ENCODE measurements at regions of chr14 and their contacts with region 1.

Region 1: DNA sequence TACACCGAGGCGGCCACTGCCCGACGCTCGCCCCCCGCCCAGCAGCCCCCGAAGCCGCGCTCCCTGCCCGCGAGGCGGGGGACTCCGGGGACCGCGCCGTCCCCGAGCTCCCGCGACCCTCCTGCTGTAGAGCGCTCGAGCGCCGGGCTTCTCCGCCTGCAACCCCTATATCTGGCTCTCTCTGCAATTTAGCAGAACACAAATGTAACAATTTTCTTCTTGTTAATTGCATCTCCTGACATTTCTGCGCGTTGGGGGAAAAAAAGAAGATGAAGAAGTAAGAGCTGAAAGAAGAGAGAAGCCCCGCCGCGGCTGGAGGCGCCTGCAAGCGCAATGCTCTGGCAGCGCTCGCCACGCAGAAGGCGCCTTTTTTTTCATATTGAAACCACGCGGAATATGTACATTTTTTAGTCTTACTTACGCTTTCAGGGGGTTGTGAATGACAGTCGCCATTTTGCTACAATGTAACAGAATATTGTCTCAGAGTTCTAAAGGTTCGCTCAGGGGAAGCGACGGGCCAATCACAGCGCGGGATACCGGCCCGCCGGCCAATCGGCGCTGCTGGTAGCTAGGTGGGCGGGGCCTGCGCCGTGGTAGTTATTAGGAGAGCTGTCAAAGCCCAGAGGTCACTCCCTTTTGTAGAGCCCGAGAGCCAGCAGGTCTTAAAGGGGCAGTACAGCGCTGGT is at the start of gene DPF3:
- DNase-seq: peak; percentile 96
- H3K4me3 ChIP-seq: peak within 1 kb of the TSS; percentile 78
- H3K27ac ChIP-seq: peak within 1 kb of the TSS; percentile 90
- H3K4me1 ChIP-seq: peaks cover 52% of the 10 kb centered on the region
- H3K27me3 ChIP-seq: peaks cover 15% of the 10 kb centered on the region
- CTCF ChIP-seq: no peak
- total RNA-seq, gene DPF3: 37.7 TPM

Region 2: DNA sequence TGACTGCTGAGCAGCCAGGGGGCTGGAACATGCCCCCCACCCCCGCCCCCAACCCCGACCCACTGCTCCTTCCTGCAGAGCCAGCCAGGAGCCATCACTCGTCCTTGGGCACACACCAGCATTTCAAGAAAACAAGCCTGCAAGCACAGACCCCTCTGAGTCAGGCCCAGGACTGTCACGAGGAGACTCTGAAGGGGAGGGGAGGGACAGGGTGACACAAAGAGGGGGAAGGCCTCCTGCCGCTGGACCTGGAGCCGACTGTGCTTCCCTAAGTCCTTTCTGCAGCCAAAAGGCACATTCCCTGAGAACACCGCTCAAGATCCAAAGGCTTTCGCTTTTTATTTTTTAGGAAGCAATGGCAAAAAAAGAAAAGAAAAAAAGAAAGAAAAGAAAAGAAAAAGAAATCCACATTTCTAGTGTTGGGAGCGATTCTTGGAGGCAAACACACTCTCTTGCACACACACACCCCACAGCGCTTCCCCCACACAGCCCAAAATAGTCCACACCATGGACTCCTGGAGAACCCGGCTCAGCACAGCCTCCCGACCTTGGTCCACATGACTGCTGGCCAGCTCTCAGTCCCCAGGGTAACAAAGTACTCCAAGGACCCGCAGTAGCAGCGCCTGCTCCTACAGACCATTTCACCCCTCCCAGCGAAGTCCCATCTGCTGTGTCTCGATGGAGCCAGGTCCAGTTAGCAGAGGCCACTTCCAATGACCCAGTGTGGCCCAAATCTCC is 101.6 kb before region 1 on chr14:
- intact Hi-C with region 1: no loop called
- DNase-seq: peak; percentile 75
- H3K4me3 ChIP-seq: peak overlapping the region; percentile 32
- H3K27ac ChIP-seq: peak overlapping the region; percentile 87
- H3K4me1 ChIP-seq: peaks cover 73% of the 10 kb centered on the region
- H3K27me3 ChIP-seq: no peaks in the 10 kb centered on the region
- CTCF ChIP-seq: no peak

Region 3: DNA sequence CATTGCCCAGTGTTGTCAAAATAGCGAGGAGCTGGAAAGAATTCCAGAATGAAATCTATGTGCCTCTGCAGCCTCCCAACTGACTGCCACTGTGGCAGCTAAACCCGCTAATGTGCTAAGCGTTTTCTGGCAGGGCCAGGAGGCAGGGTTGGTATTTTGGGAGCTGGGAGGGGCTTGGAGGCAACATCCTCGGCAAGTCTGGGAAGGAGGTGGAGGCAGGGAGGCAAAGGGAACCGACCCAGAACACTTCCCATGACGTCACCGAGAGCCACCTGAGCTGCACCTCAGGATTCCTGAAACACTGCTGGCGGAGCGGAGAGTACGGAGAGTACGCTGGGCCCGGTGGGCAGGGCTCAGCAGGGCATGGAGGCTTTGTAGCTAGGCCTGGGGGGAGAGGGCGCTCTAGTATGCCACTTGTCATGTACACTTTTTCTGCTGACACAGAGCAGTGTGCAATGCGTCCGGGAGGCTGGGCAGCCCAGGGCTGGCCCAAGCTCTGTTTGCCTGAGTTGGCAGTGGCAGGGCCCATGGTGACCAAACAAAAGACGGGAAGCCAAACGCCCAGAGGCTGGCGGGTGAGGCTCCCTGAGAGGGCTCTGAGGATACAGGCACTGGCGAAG is 81.4 kb before region 1 on chr14:
- intact Hi-C with region 1: loop called (anchors 10 kb)
- DNase-seq: peak; percentile 82
- H3K4me3 ChIP-seq: peak overlapping the region; percentile 50
- H3K27ac ChIP-seq: peak overlapping the region; percentile 93
- H3K4me1 ChIP-seq: peaks cover 89% of the 10 kb centered on the region
- H3K27me3 ChIP-seq: no peaks in the 10 kb centered on the region
- CTCF ChIP-seq: no peak

Measured in left ventricle myocardium inferior (tissue), 1 donor.